Left colon (tissue), 2 donors: ENCODE measurements at regions of chr12 and their contacts with region 1.

Region 1: GRCh38 chr12:98653866-98654493 is 8.9 kb downstream of the APAF1 start:
- DNase-seq: no peak
- ATAC-seq: peak; percentile 61

Region 2: GRCh38 chr12:98403936-98404335 is 250.0 kb before region 1 on chr12:
- intact Hi-C with region 1: no loop called
- DNase-seq: no peak
- ATAC-seq: no peak

Region 3: DNA sequence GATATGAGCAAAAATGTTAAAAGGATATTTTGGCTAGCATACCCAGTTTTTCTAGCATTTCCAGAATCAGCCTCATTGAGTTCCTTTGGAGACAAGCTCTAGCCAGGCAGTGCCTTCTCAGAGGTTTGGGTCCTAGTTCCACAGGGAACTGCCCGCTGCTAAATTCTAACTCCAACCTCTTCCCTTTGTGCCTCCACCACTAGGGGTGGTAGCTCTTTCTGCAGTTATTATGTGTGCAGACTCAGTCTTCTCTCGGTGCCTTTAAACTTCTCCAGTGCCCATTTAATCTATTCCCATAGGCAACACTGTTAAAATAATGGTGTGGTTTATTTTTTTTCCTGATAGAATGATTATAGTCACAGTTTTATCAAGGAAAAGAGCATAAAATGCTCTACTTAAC is 82.0 kb before region 1 on chr12:
- intact Hi-C with region 1: loop called in 1 of 2 experiments (anchors 2 kb)
- DNase-seq: no peak
- ATAC-seq: no peak